OCI-LY7 (cell line): ENCODE measurements at regions of chr16 and their contacts with region 1.

Region 1: DNA sequence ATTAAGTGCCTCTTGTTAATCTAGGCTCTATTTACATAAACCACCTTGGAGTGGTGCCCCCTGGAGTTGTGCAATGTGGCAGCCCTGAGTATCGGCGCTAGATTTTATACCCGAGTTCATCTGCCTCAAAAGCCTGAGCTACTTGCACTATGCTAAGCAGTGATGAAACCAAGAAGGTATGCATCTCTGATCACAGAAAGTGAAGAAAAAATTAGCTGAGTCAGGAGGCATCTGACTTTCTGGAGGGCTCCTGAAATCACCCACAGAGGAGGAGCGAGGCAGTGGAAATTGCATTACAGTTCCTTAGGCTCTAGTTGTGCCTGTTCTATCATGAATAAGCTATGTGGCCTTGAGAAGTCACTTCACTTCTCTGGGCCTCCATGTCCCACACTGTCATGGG is 80.3 kb upstream of the PSMD7 start:
- DNase-seq: no peak
- H3K4me3 ChIP-seq: no peak overlapping the region
- H3K27ac ChIP-seq: no peak overlapping the region
- H3K4me1 ChIP-seq: no peaks in the 10 kb centered on the region
- CTCF ChIP-seq: no peak

Region 2: DNA sequence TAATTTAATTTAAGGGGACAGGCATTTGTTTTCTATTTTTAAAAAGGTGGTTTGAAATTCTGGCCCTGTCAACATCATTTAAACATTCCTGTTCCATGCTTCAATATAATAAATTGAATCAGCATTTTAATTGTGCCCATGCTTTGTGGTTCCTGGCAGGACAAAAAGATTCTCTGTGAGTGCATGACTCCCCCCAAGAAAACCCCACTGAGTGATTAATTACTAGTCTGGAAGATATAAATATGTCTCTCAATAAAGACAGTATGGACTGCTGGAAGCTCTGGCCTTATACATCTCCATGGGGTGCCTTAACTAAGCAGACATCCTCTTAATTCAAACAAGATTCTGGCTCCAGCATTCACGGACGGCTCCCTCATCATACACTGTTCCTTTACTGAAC is 14.7 kb before region 1 on chr16:
- CTCF ChIA-PET with region 1: no interaction called
- POLR2A ChIA-PET with region 1: interaction called, 10 read pairs
- intact Hi-C with region 1: no loop called
- DNase-seq: no peak
- H3K4me3 ChIP-seq: no peak overlapping the region
- H3K27ac ChIP-seq: no peak overlapping the region
- H3K4me1 ChIP-seq: no peaks in the 10 kb centered on the region
- CTCF ChIP-seq: no peak